ENCODE measurements at regions of chr15 and their contacts with region 1.

Region 1: DNA sequence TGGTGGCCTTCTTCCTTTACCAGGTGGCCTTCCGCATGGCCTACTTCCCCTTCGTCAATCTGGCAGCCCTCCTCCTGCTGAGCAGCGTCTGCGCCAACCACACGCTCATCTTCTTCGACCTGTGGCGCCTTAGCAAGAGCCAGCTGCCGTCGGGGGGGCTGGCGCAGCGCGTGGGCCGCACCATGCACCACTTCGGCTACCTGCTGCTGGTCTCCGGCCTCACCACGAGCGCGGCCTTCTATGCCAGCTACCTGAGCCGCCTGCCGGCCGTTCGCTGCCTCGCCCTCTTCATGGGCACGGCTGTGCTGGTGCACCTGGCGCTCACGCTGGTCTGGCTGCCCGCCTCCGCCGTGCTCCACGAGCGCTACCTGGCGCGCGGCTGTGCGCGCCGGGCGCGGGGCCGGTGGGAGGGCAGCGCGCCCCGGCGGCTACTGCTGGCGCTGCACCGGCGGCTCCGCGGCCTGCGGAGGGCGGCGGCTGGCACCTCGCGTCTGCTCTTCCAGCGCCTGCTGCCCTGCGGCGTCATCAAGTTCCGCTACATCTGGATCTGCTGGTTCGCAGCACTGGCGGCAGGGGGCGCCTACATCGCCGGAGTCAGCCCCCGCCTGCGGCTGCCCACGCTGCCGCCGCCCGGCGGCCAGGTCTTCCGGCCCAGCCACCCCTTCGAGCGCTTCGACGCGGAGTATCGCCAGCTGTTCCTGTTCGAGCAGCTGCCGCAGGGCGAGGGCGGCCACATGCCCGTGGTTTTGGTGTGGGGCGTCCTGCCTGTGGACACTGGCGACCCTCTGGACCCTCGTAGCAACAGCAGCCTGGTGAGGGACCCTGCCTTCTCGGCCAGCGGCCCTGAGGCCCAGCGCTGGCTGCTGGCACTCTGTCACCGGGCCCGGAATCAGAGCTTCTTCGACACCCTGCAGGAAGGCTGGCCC is 9.9 kb downstream of the DISP2 start:
- DNase-seq: peak; percentile 90
- H3K4me3 Mint-ChIP-seq: peak overlapping the region; percentile 64
- H3K27ac Mint-ChIP-seq: peak overlapping the region; percentile 91
- H3K4me1 Mint-ChIP-seq: peaks cover 6% of the 10 kb centered on the region
- H3K27me3 Mint-ChIP-seq: no peaks in the 10 kb centered on the region
- CTCF ChIP-seq: peak; percentile 78

Region 2: GRCh38 chr15:40290918-40291574 is 76.9 kb before region 1 on chr15:
- CTCF ChIA-PET with region 1: interaction called, 22 read pairs
- POLR2A ChIA-PET with region 1: interaction called, 3 read pairs
- intact Hi-C with region 1: no loop called
- DNase-seq: peak; percentile 63
- H3K4me3 Mint-ChIP-seq: peak overlapping the region; percentile 62
- H3K27ac Mint-ChIP-seq: no peak overlapping the region
- H3K4me1 Mint-ChIP-seq: peaks cover 4% of the 10 kb centered on the region
- H3K27me3 Mint-ChIP-seq: peaks cover 10% of the 10 kb centered on the region
- CTCF ChIP-seq: no peak

Region 3: DNA sequence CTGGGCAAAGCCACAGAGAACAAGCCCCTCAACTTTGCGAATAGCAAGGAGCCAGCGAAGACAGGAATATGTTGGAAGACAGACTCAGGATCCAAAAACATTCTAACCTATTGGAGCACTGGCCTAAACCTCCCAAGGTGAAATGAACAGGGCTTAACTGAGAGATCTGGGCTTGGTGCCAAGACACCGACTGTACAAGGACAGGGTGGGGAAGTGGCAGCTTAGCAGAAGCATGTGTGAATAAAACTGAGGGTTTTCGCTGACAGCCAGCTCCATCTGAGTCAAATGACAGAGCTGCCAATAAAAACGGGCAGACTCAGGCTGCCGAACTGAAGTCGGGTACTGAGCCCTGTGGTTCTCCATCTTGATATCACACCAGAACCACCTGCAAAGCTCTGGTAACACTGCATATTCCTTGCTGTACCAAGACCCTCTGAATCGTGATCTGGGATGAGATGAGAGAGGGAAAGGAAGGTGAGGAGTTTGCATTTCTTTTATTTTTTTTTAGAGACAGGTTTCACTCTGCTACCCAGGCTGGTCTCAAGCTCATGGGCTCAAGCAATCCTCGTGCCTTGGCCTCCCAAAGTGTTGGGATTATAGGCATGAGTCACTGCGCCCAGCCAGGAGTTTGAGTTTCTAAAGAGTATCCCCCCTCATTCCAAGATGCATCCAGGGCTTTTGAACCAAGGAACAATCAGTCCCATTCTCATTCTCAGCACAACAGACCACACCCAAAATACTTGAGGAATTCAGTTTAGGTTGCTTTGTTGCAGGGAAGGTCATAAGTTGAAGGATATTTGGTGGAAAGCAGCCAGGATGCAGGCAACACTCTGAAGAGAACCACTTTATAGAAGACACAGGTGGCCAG is 54.2 kb before region 1 on chr15:
- CTCF ChIA-PET with region 1: interaction called, 13 read pairs
- POLR2A ChIA-PET with region 1: no interaction called
- intact Hi-C with region 1: no loop called
- DNase-seq: peak; percentile 94
- H3K4me3 Mint-ChIP-seq: peak overlapping the region; percentile 18
- H3K27ac Mint-ChIP-seq: no peak overlapping the region
- H3K4me1 Mint-ChIP-seq: peaks cover 13% of the 10 kb centered on the region
- H3K27me3 Mint-ChIP-seq: no peaks in the 10 kb centered on the region
- CTCF ChIP-seq: no peak

Region 4: GRCh38 chr15:40338041-40338657 is 29.8 kb before region 1 on chr15:
- CTCF ChIA-PET with region 1: interaction called, 112 read pairs
- POLR2A ChIA-PET with region 1: interaction called, 4 read pairs
- intact Hi-C with region 1: loop called (anchors 1 kb)
- DNase-seq: peak; percentile 68
- H3K4me3 Mint-ChIP-seq: peak overlapping the region; percentile 79
- H3K27ac Mint-ChIP-seq: peak overlapping the region; percentile 79
- H3K4me1 Mint-ChIP-seq: peaks cover 38% of the 10 kb centered on the region
- H3K27me3 Mint-ChIP-seq: no peaks in the 10 kb centered on the region
- CTCF ChIP-seq: peak; percentile 76

Region 5: GRCh38 chr15:40352281-40352901 is 15.6 kb before region 1 on chr15:
- CTCF ChIA-PET with region 1: interaction called, 38 read pairs
- POLR2A ChIA-PET with region 1: no interaction called
- intact Hi-C with region 1: no loop called
- DNase-seq: no peak
- H3K4me3 Mint-ChIP-seq: no peak overlapping the region
- H3K27ac Mint-ChIP-seq: no peak overlapping the region
- H3K4me1 Mint-ChIP-seq: no peaks in the 10 kb centered on the region
- H3K27me3 Mint-ChIP-seq: no peaks in the 10 kb centered on the region
- CTCF ChIP-seq: no peak

Region 6: DNA sequence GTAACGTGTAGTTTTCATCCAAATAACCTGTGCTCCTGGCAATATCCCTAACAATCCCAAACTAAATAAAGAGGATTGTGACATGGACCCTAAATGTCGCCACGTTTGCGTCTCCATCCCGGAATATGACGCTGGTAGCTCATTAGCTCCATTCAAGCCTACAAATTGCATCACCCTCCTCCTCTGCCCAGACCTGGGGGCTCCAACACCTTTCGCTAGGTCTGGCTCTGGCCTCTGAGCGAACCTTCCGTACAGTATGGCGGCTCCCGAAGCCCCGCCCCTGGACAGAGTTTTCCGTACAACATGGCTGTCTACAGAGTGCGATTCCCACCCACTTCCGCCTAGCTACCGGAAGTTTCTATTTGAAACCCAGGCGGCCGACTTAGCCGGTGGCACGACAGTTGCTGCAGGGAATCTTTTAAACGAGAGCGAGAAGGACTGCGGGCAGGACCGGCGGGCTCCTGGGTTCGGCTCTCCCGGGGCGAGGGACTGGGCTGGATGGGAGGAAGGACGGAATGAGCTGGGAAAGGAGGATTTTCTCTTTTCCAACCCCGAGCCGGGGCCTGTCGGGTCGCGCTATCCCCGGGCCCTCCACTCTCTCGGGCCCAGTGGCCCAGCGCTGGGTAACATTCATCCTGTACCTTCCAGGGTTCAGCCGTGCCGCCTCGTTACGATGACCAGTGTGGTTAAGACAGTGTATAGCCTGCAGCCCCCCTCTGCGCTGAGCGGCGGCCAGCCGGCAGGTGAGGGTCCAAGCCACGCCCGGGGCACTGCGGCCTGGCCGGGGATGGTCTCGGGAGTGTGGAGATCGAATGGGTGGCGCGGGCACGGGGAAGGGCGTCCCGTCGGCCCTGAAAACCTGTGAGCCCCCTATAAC is 14.9 kb after region 1 on chr15 and contains the start of gene KNSTRN:
- CTCF ChIA-PET with region 1: interaction called, 25 read pairs
- POLR2A ChIA-PET with region 1: interaction called, 10 read pairs
- intact Hi-C with region 1: no loop called
- DNase-seq: peak; percentile 95
- H3K4me3 Mint-ChIP-seq: peak within 1 kb of the TSS; percentile 97
- H3K27ac Mint-ChIP-seq: peak within 1 kb of the TSS; percentile 89
- H3K4me1 Mint-ChIP-seq: peaks cover 25% of the 10 kb centered on the region
- H3K27me3 Mint-ChIP-seq: no peaks in the 10 kb centered on the region
- CTCF ChIP-seq: no peak
- total RNA-seq, gene KNSTRN: 35.2 and 47.4 TPM in 2 replicates

Region 7: GRCh38 chr15:40405501-40406381 is 37.8 kb after region 1 on chr15 and contains the start of gene IVD:
- CTCF ChIA-PET with region 1: interaction called, 10 read pairs
- POLR2A ChIA-PET with region 1: interaction called, 5 read pairs
- intact Hi-C with region 1: no loop called
- DNase-seq: peak; percentile 94
- H3K4me3 Mint-ChIP-seq: peak within 1 kb of the TSS; percentile 83
- H3K27ac Mint-ChIP-seq: peak within 1 kb of the TSS; percentile 64
- H3K4me1 Mint-ChIP-seq: peaks cover 6% of the 10 kb centered on the region
- H3K27me3 Mint-ChIP-seq: no peaks in the 10 kb centered on the region
- CTCF ChIP-seq: no peak
- total RNA-seq, gene IVD: 53.8 and 61.6 TPM in 2 replicates

Region 8: GRCh38 chr15:40941528-40942336 is 573.8 kb after region 1 on chr15:
- CTCF ChIA-PET with region 1: no interaction called
- POLR2A ChIA-PET with region 1: no interaction called
- intact Hi-C with region 1: no loop called
- DNase-seq: peak; percentile 75
- H3K4me3 Mint-ChIP-seq: peak overlapping the region; percentile 63
- H3K27ac Mint-ChIP-seq: no peak overlapping the region
- H3K4me1 Mint-ChIP-seq: peaks cover 11% of the 10 kb centered on the region
- H3K27me3 Mint-ChIP-seq: no peaks in the 10 kb centered on the region
- CTCF ChIP-seq: peak; percentile 73